Naive thymus-derived CD4-positive, alpha-beta T cell (primary cell): ENCODE measurements at regions of chr14 and their contacts with region 1.

Region 1: DNA sequence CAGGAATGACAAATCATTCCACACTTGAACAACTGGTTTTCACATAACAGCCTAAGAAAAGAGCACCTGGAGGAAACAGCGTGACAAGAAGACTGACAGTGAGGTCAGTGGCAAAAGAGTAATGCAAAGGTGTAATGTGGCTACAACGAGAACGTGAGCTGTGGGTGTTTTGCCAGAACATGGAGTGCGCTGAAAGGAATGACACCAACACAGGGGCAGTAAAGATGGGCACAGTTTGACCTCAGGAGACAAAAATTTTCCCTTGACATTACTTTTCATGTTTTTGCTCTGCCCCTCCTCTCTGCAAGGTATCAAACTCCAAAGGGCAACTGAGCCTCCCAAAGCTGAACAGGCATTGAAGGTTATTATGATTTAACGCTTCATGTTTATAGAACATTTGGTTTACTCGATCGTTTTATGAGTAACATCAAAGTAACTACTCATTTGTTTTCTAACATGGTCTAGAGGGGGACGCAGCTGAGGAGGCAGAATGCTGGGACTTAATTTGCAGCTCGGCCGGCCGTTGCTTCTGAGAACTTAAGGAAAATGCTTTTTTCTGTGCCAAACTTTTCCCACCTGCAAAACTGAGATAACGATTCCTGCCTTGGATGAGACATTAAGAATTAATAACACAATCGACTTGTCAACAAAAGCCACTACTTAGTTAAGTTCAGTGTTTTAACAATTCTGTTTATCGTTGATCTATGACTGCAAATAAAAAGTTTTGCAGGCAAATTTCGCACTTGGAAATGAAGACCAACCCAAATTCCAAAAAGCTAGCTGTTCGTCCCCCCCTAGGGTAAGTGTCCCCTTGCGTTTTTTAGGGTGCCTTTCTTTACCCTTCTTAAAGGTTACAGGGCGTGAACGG is 954 bp downstream of the HAUS4 start:
- DNase-seq: no peak
- ATAC-seq: no peak
- H3K4me3 ChIP-seq: peak overlapping the region; percentile 64
- H3K4me3 Mint-ChIP-seq: peak overlapping the region; percentile 87 to 95 (median 93)
- H3K27ac ChIP-seq: peak overlapping the region; percentile 85
- H3K27ac Mint-ChIP-seq: peak overlapping the region; percentile 88 to 96 (median 92)
- H3K4me1 ChIP-seq: peaks cover 0 to 6% of the 10 kb centered on the region in 2 donors
- H3K4me1 Mint-ChIP-seq: peaks cover 0 to 31% (median 19%) of the 10 kb centered on the region in 7 donors
- H3K27me3 ChIP-seq: no peaks in the 10 kb centered on the region
- H3K27me3 Mint-ChIP-seq: peaks cover 0 to 4% (median 0%) of the 10 kb centered on the region in 5 donors

Region 2: DNA sequence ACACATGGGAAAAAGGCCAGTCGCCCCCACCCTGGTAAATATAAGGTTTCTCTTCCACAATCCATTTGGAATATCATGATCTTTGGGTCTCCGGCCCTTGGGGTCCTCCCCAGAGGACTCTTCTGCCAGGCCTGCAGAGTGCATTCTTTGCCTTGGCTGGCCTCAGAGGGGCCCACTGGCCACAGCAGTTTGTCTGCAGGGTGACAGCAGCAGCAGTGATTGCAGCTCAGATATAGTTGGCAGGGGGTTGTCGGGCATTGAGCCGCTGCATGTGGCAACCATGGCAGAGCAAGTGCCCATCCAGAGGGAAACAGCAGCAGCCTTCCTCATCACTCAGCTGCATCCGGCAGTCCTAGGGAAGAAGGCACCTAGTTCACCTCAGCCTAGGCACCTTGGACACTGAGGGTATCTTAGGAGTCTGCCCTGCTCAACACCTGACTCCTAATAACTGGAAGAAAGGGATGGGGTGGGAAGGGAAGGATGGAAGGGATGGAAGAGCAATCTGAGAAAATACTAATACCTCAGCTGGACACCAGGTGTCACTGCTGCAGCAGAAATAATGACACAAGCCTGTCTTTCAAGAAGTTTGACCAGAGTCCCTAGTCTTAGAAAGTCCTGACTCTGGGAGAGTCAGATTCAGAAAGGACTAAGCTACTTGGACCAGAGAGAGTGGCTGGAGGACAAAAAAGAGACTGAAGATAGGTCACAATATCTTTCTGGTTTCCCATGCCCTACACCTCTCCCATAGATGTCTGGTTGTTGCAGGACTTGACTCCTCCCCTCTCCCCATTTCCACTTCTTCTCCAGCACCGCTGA is 17.5 kb after region 1 on chr14:
- CTCF ChIA-PET with region 1: interaction called, 14 read pairs
- POLR2A ChIA-PET with region 1: interaction called, 4 read pairs
- intact Hi-C with region 1: no loop called
- DNase-seq: peak in 6 of 9 donors; percentile 28 to 46 (median 40)
- ATAC-seq: peak; percentile 73
- H3K4me3 ChIP-seq: no peak overlapping the region
- H3K4me3 Mint-ChIP-seq: no peak overlapping the region
- H3K27ac ChIP-seq: no peak overlapping the region
- H3K27ac Mint-ChIP-seq: no peak overlapping the region
- H3K4me1 ChIP-seq: no peaks in the 10 kb centered on the region
- H3K4me1 Mint-ChIP-seq: peaks cover 0 to 1% (median 0%) of the 10 kb centered on the region in 7 donors
- H3K27me3 ChIP-seq: no peaks in the 10 kb centered on the region
- H3K27me3 Mint-ChIP-seq: peaks cover 0 to 19% (median 0%) of the 10 kb centered on the region in 5 donors